Pancreas (tissue), 10 donors: ENCODE measurements at regions of chr9 and their contacts with region 1.

Region 1: DNA sequence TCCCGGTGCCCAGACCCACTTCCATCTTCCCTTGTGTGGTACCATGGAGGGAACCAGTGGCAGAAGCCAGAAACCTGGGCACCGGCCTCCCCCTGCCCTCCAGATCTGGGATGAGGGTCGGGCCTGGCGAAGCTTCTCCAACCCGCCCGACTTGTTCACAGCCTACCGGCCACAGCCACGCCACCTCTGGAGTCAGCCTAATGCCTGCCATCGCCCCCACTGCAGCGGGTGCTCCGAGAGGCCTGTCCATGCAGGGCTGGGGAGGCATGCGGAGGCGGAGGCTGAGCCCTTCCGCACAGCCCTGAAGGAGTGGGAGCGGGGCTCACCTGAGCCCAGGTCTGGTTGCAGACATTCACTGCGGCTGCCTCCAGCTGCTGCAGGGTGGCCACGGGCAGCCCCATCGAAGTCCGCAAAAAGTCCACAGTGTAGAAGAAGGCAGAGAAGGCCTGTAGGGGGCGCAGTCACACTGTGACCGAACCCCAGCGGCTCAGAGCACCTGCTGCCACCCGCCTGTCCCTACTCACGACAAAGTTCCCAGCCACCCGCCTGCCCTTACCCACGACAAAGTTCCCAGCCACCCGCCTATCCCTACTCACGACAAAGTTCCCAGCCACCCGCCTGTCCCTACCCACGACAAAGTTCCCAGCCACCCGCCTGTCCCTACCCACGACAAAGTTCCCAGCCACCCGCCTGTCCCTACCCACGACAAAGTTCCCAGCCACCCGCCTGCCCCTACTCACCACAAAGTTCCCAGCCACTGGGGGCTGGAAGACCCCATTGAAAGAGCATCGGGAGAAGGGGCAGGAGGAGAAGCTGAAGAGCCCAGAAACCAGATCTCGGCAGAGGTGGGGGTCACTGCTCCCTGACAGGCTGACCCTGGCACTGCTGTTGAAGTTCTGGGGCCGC is 3.8 kb upstream of the NPDC1 start:
- DNase-seq: peak; percentile 63 to 90 (median 80)
- ATAC-seq: peak; percentile 29 to 46 (median 39)
- H3K4me3 ChIP-seq: no peak overlapping the region
- H3K27ac ChIP-seq: no peak overlapping the region
- H3K4me1 ChIP-seq: peaks cover 7 to 20% (median 16%) of the 10 kb centered on the region in 3 donors
- H3K27me3 ChIP-seq: peaks cover 0 to 7% (median 0%) of the 10 kb centered on the region in 4 donors
- CTCF ChIP-seq: peak; percentile 57 to 61 (median 57)

Region 2: GRCh38 chr9:137064027-137064879 is 14.5 kb after region 1 on chr9:
- intact Hi-C with region 1: loop called in 1 of 3 experiments (anchors 2 kb)
- DNase-seq: peak in 5 of 6 donors; percentile 51 to 95 (median 81)
- ATAC-seq: peak; percentile 64 to 85 (median 81)
- H3K4me3 ChIP-seq: no peak overlapping the region
- H3K27ac ChIP-seq: no peak overlapping the region
- H3K4me1 ChIP-seq: no peaks in the 10 kb centered on the region
- H3K27me3 ChIP-seq: no peaks in the 10 kb centered on the region
- CTCF ChIP-seq: peak; percentile 89 to 97 (median 92)